ENCODE measurements at regions of chr17 and their contacts with region 1.

Region 1: DNA sequence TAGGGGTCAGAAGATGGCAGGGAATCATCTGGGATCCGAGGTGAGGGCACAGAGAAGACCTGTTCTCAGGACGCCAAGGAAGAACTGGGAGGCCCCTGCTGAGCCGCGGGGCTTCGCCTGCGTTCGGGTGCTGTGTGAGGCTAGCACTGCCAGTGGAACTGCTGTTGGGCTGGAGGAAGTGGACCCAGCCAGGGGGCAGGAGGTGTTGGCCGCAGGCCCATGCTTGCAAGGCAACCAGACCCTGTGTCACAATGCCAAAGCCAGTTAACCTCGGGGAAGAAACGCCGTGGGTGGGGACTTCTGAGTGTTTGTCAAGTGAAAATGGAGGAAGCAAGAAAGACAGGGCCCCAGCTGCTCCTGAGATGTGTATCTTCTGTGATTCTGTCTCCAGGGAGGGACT is 185.5 kb downstream of the LGALS9B start:
- DNase-seq: no peak
- ATAC-seq: peak; percentile 65
- H3K4me3 ChIP-seq: no peak overlapping the region
- H3K4me3 Mint-ChIP-seq: peak overlapping the region in 1 of 10 donors; percentile 45
- H3K27ac ChIP-seq: no peak overlapping the region
- H3K27ac Mint-ChIP-seq: peak overlapping the region in 5 of 9 donors; percentile 2 to 73 (median 53)
- H3K4me1 ChIP-seq: peaks cover 0 to 24% of the 10 kb centered on the region in 2 donors
- H3K4me1 Mint-ChIP-seq: peaks cover 28 to 68% (median 55%) of the 10 kb centered on the region in 7 donors
- H3K27me3 ChIP-seq: no peaks in the 10 kb centered on the region
- H3K27me3 Mint-ChIP-seq: no peaks in the 10 kb centered on the region

Region 2: GRCh38 chr17:20234276-20234675 is 47.6 kb before region 1 on chr17:
- CTCF ChIA-PET with region 1: interaction called, 3 read pairs
- POLR2A ChIA-PET with region 1: interaction called, 6 read pairs
- intact Hi-C with region 1: loop called in 1 of 2 experiments (anchors 5 kb)
- DNase-seq: peak in 8 of 9 donors; percentile 58 to 79 (median 69)
- ATAC-seq: peak; percentile 93
- H3K4me3 ChIP-seq: peak overlapping the region; percentile 19
- H3K4me3 Mint-ChIP-seq: peak overlapping the region; percentile 64 to 84 (median 69)
- H3K27ac ChIP-seq: peak overlapping the region; percentile 26
- H3K27ac Mint-ChIP-seq: peak overlapping the region; percentile 74 to 92 (median 88)
- H3K4me1 ChIP-seq: peaks cover 4 to 24% of the 10 kb centered on the region in 2 donors
- H3K4me1 Mint-ChIP-seq: peaks cover 29 to 73% (median 60%) of the 10 kb centered on the region in 7 donors
- H3K27me3 ChIP-seq: no peaks in the 10 kb centered on the region
- H3K27me3 Mint-ChIP-seq: no peaks in the 10 kb centered on the region

Region 3: DNA sequence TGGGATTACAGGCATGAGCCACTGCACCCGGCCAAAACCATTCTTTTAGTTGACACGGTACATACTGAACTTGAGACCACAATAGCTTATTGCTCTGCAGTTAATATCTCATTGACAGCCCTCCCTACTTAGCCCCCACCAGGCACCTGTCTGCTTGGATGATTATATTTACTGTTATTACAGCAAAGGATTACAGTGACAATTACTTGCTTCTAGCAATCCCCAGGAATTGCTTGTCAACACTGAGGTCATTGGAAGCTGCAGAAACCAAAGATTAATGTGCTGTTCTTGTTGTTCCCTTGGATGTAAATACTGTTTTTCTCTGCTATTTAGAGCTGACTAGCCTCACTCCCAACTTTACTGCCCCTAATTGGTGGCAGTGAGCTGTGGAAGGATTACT is 25.7 kb before region 1 on chr17:
- CTCF ChIA-PET with region 1: no interaction called
- POLR2A ChIA-PET with region 1: interaction called, 5 read pairs
- intact Hi-C with region 1: loop called in 1 of 2 experiments (anchors 2 kb)
- DNase-seq: no peak
- ATAC-seq: no peak
- H3K4me3 ChIP-seq: no peak overlapping the region
- H3K4me3 Mint-ChIP-seq: no peak overlapping the region
- H3K27ac ChIP-seq: no peak overlapping the region
- H3K27ac Mint-ChIP-seq: peak overlapping the region in 5 of 9 donors; percentile 34 to 85 (median 53)
- H3K4me1 ChIP-seq: peaks cover 0 to 32% of the 10 kb centered on the region in 2 donors
- H3K4me1 Mint-ChIP-seq: peaks cover 21 to 81% (median 70%) of the 10 kb centered on the region in 7 donors
- H3K27me3 ChIP-seq: no peaks in the 10 kb centered on the region
- H3K27me3 Mint-ChIP-seq: no peaks in the 10 kb centered on the region

Region 4: DNA sequence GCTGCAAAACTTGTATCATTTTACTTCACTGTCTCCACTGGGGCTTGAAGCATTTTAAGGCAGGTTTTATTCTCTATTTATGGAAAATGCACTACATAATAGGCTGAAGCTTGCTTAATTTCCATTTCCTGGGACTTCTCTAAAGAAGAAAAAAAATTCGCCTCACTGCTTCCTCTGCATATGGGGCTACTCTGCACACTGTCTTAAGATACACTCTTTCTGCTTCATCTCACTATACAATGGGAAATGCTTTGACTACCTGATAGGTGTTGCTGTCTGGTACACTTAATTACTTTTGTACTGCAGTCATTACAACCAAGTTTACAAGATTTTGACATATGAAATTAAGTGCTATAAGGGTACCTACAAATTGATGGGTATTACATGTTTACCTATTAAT is 1876.5 kb after region 1 on chr17:
- CTCF ChIA-PET with region 1: no interaction called
- POLR2A ChIA-PET with region 1: no interaction called
- intact Hi-C with region 1: no loop called
- DNase-seq: no peak
- ATAC-seq: no peak
- H3K4me3 ChIP-seq: no peak overlapping the region
- H3K4me3 Mint-ChIP-seq: no peak overlapping the region
- H3K27ac ChIP-seq: no peak overlapping the region
- H3K27ac Mint-ChIP-seq: no peak overlapping the region
- H3K4me1 ChIP-seq: no peaks in the 10 kb centered on the region
- H3K4me1 Mint-ChIP-seq: no peaks in the 10 kb centered on the region
- H3K27me3 ChIP-seq: no peaks in the 10 kb centered on the region
- H3K27me3 Mint-ChIP-seq: no peaks in the 10 kb centered on the region

Measured in naive thymus-derived CD4-positive, alpha-beta T cell (primary cell).